ENCODE measurements at regions of chr17 and their contacts with region 1.

Region 1: GRCh38 chr17:35808962-35809854 is at the start of gene TAF15:
- DNase-seq: peak; percentile 98
- ATAC-seq: peak; percentile 88
- H3K4me3 Mint-ChIP-seq: peak within 1 kb of the TSS; percentile 78
- H3K27ac Mint-ChIP-seq: peak within 1 kb of the TSS; percentile 97
- H3K4me1 Mint-ChIP-seq: peaks cover 57% of the 10 kb centered on the region
- H3K27me3 Mint-ChIP-seq: no peaks in the 10 kb centered on the region
- total RNA-seq, gene TAF15: 316 to 330 TPM

Region 2: DNA sequence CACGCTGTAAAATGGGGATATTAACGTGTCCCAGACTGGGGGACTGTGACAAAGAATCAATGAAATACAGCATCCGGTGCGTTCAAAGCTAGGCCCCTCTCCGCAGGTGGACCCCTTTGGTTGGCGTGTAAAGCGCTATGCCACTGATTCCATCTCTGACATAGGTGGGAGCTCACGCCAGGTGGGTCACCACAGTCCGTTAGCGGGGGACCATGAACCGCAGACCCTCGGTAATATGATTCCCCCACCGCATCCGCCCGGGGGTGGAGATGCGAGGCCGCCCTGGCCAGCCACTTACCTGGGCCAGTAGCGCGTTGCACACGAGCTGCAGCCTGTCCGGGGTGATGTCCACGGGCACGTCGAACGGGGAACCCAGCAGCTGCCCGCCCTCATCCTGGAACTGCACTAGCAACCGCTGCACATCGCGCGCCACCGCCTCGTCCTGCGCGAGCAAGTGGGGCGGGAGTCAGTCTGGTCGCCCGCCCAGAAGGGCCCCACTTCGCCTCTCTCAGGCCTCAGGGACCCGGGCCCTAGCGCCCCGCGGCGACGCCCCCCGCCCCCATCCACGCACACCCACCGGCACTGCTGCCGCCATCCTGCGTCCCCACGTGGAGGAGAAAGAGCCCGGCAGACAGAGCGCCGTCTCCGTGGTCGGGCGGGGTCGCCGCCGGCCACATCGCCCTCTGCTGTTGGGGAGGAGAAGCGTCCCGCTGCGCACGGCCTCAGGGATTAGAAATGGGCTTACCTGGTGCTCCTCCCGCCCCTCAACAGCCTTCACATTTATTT is 667.3 kb before region 1 on chr17 and contains the start of gene NLE1:
- CTCF ChIA-PET with region 1: no interaction called
- POLR2A ChIA-PET with region 1: no interaction called
- intact Hi-C with region 1: loop called in 1 of 2 experiments (anchors 2 kb)
- DNase-seq: peak; percentile 94
- ATAC-seq: peak; percentile 93
- H3K4me3 Mint-ChIP-seq: peak within 1 kb of the TSS; percentile 80
- H3K27ac Mint-ChIP-seq: peak within 1 kb of the TSS; percentile 81
- H3K4me1 Mint-ChIP-seq: peaks cover 14% of the 10 kb centered on the region
- H3K27me3 Mint-ChIP-seq: no peaks in the 10 kb centered on the region
- total RNA-seq, gene NLE1: 38.1 to 40.6 TPM

Region 3: GRCh38 chr17:35373534-35373983 is 435.6 kb before region 1 on chr17 and contains the start of gene SLFN11:
- CTCF ChIA-PET with region 1: no interaction called
- POLR2A ChIA-PET with region 1: no interaction called
- intact Hi-C with region 1: loop called in 1 of 2 experiments (anchors 2 kb)
- DNase-seq: peak; percentile 95
- ATAC-seq: peak; percentile 70
- H3K4me3 Mint-ChIP-seq: peak within 1 kb of the TSS; percentile 85
- H3K27ac Mint-ChIP-seq: peak within 1 kb of the TSS; percentile 98
- H3K4me1 Mint-ChIP-seq: peaks cover 50% of the 10 kb centered on the region
- H3K27me3 Mint-ChIP-seq: peaks cover 1% of the 10 kb centered on the region
- total RNA-seq, gene SLFN11: 63.7 to 67.9 TPM

Region 4: GRCh38 chr17:35540589-35541404 is 268.4 kb before region 1 on chr17:
- CTCF ChIA-PET with region 1: no interaction called
- POLR2A ChIA-PET with region 1: no interaction called
- intact Hi-C with region 1: loop called in 1 of 2 experiments (anchors 2 kb)
- DNase-seq: peak; percentile 62
- ATAC-seq: no peak
- H3K4me3 Mint-ChIP-seq: peak overlapping the region; percentile 78
- H3K27ac Mint-ChIP-seq: peak overlapping the region; percentile 100
- H3K4me1 Mint-ChIP-seq: peaks cover 48% of the 10 kb centered on the region
- H3K27me3 Mint-ChIP-seq: no peaks in the 10 kb centered on the region

Region 5: GRCh38 chr17:35764123-35764991 is 44.9 kb before region 1 on chr17:
- CTCF ChIA-PET with region 1: interaction called, 123 read pairs
- POLR2A ChIA-PET with region 1: interaction called, 37 read pairs
- intact Hi-C with region 1: loop called (anchors 1 kb)
- DNase-seq: peak; percentile 93
- ATAC-seq: peak; percentile 95
- H3K4me3 Mint-ChIP-seq: peak overlapping the region; percentile 80
- H3K27ac Mint-ChIP-seq: peak overlapping the region; percentile 70
- H3K4me1 Mint-ChIP-seq: peaks cover 9% of the 10 kb centered on the region
- H3K27me3 Mint-ChIP-seq: no peaks in the 10 kb centered on the region

Region 6: DNA sequence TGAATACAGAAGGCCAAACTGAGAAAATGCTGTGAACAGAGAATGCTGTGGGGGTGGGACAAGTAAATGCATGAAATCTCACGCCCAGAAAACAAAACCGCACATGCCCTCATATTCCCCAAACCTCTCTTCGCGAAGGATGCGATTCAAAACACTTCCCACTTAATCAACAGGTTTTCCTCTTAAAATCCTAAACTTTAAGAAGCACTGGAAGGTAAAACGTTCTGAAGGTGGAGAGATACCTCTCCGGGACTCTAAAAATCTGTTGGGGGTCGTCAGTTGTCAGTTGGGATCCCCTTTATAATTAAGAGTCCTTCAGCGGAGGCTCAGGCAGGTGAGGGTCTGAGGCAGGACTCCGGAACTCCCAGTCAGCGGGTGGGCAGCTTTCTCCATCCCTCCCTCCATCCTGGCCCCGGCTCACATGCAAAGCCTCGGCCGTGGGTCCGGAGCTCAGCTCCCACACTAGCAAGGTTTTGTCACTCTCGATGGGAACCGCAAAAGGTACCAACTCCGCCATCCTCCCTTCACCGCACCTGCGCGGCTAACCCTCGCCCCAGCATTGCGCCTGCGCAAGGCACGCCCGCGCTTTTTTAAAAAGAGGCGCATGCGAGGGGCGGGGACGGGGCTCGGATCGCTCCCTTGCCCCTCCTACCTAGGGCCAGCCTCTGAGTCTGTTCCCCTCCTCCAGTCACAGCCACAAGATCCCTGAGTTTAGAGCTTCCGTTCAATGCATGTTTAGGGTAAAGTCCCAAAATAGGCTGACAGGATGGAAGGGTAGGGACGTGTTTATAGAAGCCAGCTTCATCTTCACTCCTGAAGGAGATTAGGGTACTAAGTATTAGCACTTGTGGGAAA is 121.2 kb after region 1 on chr17 and contains the start of gene RDM1:
- CTCF ChIA-PET with region 1: no interaction called
- POLR2A ChIA-PET with region 1: no interaction called
- intact Hi-C with region 1: loop called in 1 of 2 experiments (anchors 1 kb)
- DNase-seq: peak; percentile 95
- ATAC-seq: peak; percentile 100
- H3K4me3 Mint-ChIP-seq: peak within 1 kb of the TSS; percentile 80
- H3K27ac Mint-ChIP-seq: peak within 1 kb of the TSS; percentile 62
- H3K4me1 Mint-ChIP-seq: peaks cover 22% of the 10 kb centered on the region
- H3K27me3 Mint-ChIP-seq: no peaks in the 10 kb centered on the region
- total RNA-seq, gene RDM1: 4.4 to 6.5 TPM

Region 7: DNA sequence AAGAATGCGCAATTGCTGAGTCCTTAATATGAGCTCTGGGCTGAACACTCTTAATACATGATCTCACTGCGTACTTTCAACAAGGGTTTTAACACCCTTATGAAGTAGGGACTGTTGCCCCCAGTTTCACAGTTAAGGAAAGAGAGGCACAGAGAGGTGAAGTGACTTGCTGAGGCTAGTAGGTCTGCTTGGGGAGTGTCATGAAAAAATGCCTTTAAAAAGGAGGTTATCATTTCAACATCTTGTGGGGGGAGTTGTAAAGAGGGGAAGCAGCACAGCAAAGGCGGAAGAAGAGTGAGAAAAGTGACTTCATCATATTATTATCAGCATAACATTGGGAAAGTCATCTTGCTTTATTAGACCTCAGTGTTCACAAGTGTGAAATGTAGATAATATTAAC is 403.8 kb after region 1 on chr17:
- CTCF ChIA-PET with region 1: no interaction called
- POLR2A ChIA-PET with region 1: no interaction called
- intact Hi-C with region 1: no loop called
- DNase-seq: no peak
- ATAC-seq: no peak
- H3K4me3 Mint-ChIP-seq: no peak overlapping the region
- H3K27ac Mint-ChIP-seq: no peak overlapping the region
- H3K4me1 Mint-ChIP-seq: no peaks in the 10 kb centered on the region
- H3K27me3 Mint-ChIP-seq: peaks cover 9% of the 10 kb centered on the region

Measured in activated CD4-positive, alpha-beta T cell treated with anti-CD3 and anti-CD28 coated beads for 36 hours (primary cell).